HCT116 (cell line): ENCODE measurements at regions of chr20 and their contacts with region 1.

Region 1: DNA sequence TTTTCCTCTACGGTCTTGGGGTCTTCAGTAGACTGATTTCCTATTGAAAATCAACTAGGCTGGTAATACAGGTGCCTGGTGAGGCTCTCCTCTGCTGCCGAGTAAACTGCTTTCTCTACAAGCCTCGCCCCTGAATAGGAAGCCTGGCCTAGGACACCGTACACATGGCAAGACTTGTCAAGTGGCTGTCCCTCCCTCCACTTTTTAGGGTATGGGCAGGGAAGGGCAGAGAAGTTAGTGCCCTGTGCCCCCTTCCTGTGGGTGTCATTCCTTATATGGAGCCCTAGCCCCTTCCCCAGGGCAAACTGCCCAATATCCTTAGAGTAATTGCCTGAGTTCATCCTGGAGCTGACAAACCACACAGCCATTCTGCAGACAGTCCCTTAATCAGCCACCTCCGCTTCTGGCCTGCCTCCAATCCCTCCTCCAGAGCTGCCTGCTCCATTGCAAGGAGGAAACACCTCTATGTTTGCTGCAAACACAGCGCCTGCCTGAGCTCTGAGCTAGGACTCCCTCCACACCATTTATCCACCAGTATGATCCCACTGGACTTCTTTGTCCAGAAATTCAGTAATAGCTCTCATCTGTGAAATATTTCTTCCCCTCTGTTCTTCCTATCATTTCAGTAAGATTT is 93.1 kb downstream of the CHD6 start:
- DNase-seq: no peak
- ATAC-seq: no peak
- H3K4me3 ChIP-seq: no peak overlapping the region
- H3K27ac ChIP-seq: no peak overlapping the region
- H3K4me1 ChIP-seq: 0 out of 4 replicates have a peak, but pooled peaks cover 0 to 2% of the 10 kb centered on the region in 2 experiments
- H3K27me3 ChIP-seq: no peaks in the 10 kb centered on the region
- CTCF ChIP-seq: no peak
- POLR2A ChIP-seq: no peak
- RAD21 ChIP-seq: no peak

Region 2: GRCh38 chr20:40880063-40880728 is 644.9 kb before region 1 on chr20:
- CTCF ChIA-PET with region 1: no interaction called
- POLR2A ChIA-PET with region 1: no interaction called
- RAD21 ChIA-PET with region 1: no interaction called
- intact Hi-C with region 1: no loop called
- DNase-seq: no peak
- ATAC-seq: peak; percentile 69; the same call in 1 of the 2 replicates
- H3K4me3 ChIP-seq: no peak overlapping the region
- H3K27ac ChIP-seq: no peak overlapping the region
- H3K4me1 ChIP-seq: peaks cover 0 to 7% of the 10 kb centered on the region in 2 experiments; a peak in 2 of 4 replicates
- H3K27me3 ChIP-seq: no peaks in the 10 kb centered on the region
- CTCF ChIP-seq: peak in 2 of 3 experiments; percentile 28 to 37; a peak in 2 of 6 replicates
- POLR2A ChIP-seq: no peak
- RAD21 ChIP-seq: no peak

Region 3: DNA sequence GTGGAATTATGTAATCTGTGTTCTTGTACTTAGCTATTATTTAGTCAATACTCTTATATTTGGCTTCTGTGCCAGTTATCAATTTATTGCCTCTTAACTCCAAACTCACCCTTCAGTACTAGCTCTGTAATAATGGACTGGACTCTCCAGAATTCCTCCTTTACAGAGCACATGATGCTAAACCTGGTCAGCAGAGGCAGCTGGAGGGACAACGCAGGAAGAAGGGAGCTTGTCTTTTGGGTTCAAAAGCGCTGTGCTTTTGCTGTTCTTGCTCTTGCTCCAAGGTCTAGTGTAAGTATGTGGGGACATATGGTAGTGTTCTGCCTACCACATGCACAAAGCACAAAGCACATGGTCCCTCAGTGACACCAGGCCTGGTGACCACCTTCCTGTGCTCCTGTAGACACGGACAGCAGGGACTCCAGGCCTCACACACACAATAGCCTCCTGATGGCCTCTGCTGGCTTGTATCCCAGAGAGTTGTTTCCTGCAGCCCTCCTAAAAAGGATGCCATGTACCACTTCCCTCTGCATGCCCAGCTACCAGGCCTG is 47.0 kb after region 1 on chr20:
- CTCF ChIA-PET with region 1: no interaction called
- POLR2A ChIA-PET with region 1: no interaction called
- RAD21 ChIA-PET with region 1: no interaction called
- intact Hi-C with region 1: loop called (anchors 5 kb)
- DNase-seq: no peak
- ATAC-seq: peak; percentile 68
- H3K4me3 ChIP-seq: no peak overlapping the region
- H3K27ac ChIP-seq: no peak overlapping the region
- H3K4me1 ChIP-seq: no peaks in the 10 kb centered on the region
- H3K27me3 ChIP-seq: no peaks in the 10 kb centered on the region
- CTCF ChIP-seq: peak in 2 of 3 experiments; percentile 46 to 54; a peak in 3 of 6 replicates
- POLR2A ChIP-seq: no peak
- RAD21 ChIP-seq: peak; percentile 24; the same call in 1 of the 2 replicates